ENCODE measurements at regions of chr13 and their contacts with region 1.

Region 1: DNA sequence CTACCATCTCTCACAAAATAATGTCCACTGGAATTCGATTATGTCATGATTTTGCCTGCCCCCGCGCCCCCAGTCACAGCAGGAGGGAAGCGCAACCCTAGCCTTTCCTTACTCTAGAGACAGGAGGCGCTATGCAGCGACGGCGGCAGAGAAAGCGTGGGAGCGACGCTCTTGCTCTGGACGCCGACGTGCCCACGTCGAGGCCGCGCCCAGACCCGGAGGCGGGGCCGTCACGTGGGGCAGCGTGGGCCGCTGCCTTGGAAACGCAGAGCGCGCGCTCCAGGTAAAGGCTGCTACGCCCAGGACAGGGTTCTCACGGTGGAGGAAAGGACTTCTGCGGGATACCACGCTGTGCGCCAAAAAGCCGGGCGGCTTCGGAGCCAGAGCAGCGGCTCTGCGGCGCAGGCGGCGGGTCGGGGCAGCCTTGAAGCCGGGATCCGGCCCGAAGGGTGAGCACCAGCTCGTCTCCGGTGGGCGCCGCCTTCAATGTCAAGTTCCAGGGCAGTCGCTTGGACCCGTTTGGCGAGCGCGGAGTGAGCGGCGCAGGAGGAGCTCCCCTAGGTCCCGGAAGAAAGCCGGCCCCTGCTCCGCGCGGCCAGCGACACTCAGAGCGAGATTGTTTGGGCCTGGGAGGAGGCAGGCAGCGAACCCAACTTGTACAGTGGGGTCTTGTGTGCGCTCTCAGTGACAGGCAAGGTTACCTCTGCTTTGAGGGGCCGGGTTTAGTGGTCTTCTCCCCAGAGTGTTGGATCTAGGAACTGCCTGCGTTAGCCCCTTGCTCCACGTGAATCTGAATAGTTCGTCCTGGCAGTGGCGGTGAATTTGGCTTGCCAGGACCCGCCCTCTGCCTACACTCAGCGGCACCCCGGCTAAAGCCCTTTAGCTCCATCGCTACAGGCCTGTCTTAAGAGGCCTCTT is 121.7 kb downstream of the MRPL57 start:
- DNase-seq: peak; percentile 67
- ATAC-seq: peak; percentile 96
- H3K4me3 ChIP-seq: peak overlapping the region; percentile 78
- H3K27ac ChIP-seq: peak overlapping the region; percentile 63
- H3K4me1 ChIP-seq: no peaks in the 10 kb centered on the region
- H3K27me3 ChIP-seq: no peaks in the 10 kb centered on the region
- CTCF ChIP-seq: peak; percentile 81 to 94 (median 92)
- EP300 ChIP-seq: no peak
- POLR2A ChIP-seq: peak; percentile 27
- RAD21 ChIP-seq: peak; percentile 53

Region 2: DNA sequence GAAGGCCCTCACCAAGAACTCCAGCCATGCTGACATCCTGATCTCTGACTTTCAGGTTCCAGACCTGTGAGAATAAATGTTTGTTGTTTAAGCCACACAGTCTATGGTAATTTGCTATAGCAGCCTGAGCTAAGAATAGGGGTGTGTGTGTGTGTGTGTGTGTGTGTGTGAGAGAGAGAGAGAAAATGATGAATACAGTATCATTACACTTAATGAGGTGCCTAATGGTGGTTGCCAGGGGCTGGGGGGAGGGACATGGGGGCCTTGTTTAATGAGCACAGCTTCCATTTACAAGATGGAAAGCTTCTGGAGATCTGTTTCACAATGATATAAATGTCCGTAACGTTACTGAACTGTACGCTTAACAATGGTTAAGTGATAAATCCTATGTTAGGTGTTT is 182.9 kb before region 1 on chr13:
- CTCF ChIA-PET with region 1: interaction called, 3 read pairs
- POLR2A ChIA-PET with region 1: no interaction called
- RAD21 ChIA-PET with region 1: no interaction called
- SMC1A ChIA-PET with region 1: no interaction called
- in situ Hi-C with region 1: no loop called
- intact Hi-C with region 1: loop called (anchors 10 kb)
- DNase-seq: no peak
- ATAC-seq: no peak
- H3K4me3 ChIP-seq: no peak overlapping the region
- H3K27ac ChIP-seq: no peak overlapping the region
- H3K4me1 ChIP-seq: no peaks in the 10 kb centered on the region
- H3K27me3 ChIP-seq: no peaks in the 10 kb centered on the region
- CTCF ChIP-seq: no peak
- EP300 ChIP-seq: no peak
- POLR2A ChIP-seq: no peak
- RAD21 ChIP-seq: no peak

Region 3: GRCh38 chr13:21310221-21310620 is 12.0 kb after region 1 on chr13:
- CTCF ChIA-PET with region 1: interaction called, 16 read pairs
- POLR2A ChIA-PET with region 1: no interaction called
- RAD21 ChIA-PET with region 1: interaction called, 5 read pairs
- SMC1A ChIA-PET with region 1: interaction called, 4 read pairs
- in situ Hi-C with region 1: no loop called
- intact Hi-C with region 1: no loop called
- DNase-seq: no peak
- ATAC-seq: no peak
- H3K4me3 ChIP-seq: no peak overlapping the region
- H3K27ac ChIP-seq: no peak overlapping the region
- H3K4me1 ChIP-seq: no peaks in the 10 kb centered on the region
- H3K27me3 ChIP-seq: no peaks in the 10 kb centered on the region
- CTCF ChIP-seq: no peak
- EP300 ChIP-seq: no peak
- POLR2A ChIP-seq: no peak
- RAD21 ChIP-seq: no peak

Region 4: GRCh38 chr13:21344662-21345176 is 46.5 kb after region 1 on chr13:
- CTCF ChIA-PET with region 1: interaction called, 9 read pairs
- POLR2A ChIA-PET with region 1: no interaction called
- RAD21 ChIA-PET with region 1: interaction called, 11 read pairs
- SMC1A ChIA-PET with region 1: interaction called, 7 read pairs
- in situ Hi-C with region 1: no loop called
- intact Hi-C with region 1: no loop called
- DNase-seq: no peak
- ATAC-seq: peak; percentile 69
- H3K4me3 ChIP-seq: peak overlapping the region; percentile 41; the same call in 1 of the 2 replicates
- H3K27ac ChIP-seq: peak overlapping the region; percentile 39
- H3K4me1 ChIP-seq: peaks cover 17% of the 10 kb centered on the region
- H3K27me3 ChIP-seq: no peaks in the 10 kb centered on the region
- CTCF ChIP-seq: no peak
- EP300 ChIP-seq: no peak
- POLR2A ChIP-seq: 0 out of 2 replicates have a peak, but pooled peaks have one; percentile 37
- RAD21 ChIP-seq: no peak

Region 5: DNA sequence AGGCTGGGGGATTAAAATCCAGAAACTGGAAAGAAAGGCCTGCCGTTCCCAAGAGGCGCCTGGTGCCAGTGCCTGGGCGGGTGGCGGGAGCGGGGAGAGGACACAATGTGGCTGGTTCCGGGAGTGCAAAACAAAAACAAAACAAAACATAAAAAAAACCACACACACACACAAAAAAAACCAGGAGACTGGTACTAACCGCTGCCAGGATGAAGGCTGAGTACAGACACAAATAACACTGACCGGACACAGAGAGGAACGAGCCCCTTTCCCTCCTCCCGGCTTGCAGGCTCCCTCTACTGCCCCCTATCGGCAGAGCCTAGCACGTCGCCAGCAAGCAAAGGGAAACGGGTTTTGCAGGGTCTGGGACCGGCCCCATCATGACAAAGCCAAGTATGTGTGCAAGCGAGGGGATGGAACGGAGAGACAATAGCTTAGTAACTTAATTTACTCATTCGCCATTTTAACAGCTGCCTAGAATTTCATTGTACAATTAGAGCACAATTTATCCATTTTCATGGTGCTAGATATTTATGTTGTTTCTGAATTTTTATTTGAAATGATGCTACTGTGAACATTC is 178.8 kb after region 1 on chr13:
- CTCF ChIA-PET with region 1: interaction called, 156 read pairs
- POLR2A ChIA-PET with region 1: interaction called, 8 read pairs
- RAD21 ChIA-PET with region 1: interaction called, 63 read pairs
- SMC1A ChIA-PET with region 1: interaction called, 70 read pairs
- in situ Hi-C with region 1: loop called (anchors 5 kb)
- intact Hi-C with region 1: loop called (anchors 1 kb)
- DNase-seq: peak; percentile 50
- ATAC-seq: peak; percentile 97
- H3K4me3 ChIP-seq: peak overlapping the region; percentile 71
- H3K27ac ChIP-seq: peak overlapping the region; percentile 48; the same call in 1 of the 2 replicates
- H3K4me1 ChIP-seq: no peaks in the 10 kb centered on the region
- H3K27me3 ChIP-seq: no peaks in the 10 kb centered on the region
- CTCF ChIP-seq: peak; percentile 88 to 98 (median 98)
- EP300 ChIP-seq: no peak
- POLR2A ChIP-seq: peak; percentile 42; the same call in 1 of the 2 replicates
- RAD21 ChIP-seq: peak; percentile 87

Measured in GM12878 (cell line).